Activated CD4-positive, alpha-beta T cell treated with anti-CD3 and anti-CD28 coated beads for 36 hours (primary cell): ENCODE measurements at regions of chr12 and their contacts with region 1.

Region 1: DNA sequence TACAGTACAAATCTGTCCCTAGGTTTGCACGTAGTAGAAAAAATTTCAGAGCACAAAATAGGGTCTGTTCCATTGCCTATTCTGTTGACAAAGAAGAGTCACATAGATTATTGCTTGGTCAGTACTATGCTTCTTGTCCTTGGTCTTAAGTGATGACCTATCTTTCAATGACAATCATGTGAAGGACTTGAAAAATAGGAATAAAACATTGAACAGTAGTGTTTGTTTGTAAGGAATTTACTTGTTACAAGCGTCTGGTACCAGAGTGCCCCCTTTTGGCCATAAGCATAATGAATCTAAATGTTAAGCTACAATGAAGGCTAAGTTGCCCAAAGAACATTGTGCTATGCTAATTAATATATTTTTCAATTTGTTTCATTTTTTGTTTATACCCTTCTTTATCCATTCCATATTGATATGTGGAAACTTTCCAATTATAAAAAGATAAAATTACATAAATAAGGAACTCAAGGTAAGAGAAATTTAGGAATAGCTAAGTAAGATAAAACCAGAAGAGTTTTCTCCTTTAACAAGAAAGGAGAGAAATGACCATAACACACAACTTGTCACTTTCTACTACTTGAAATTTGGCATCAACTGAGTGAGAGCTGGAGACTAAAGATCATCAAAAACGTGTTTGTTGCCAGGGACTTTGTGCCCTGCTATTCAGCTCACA is 204.7 kb downstream of the EPS8 start:
- DNase-seq: peak; percentile 53
- ATAC-seq: peak; percentile 64
- H3K4me3 Mint-ChIP-seq: no peak overlapping the region
- H3K27ac Mint-ChIP-seq: no peak overlapping the region
- H3K4me1 Mint-ChIP-seq: peaks cover 13% of the 10 kb centered on the region
- H3K27me3 Mint-ChIP-seq: no peaks in the 10 kb centered on the region

Region 2: GRCh38 chr12:15220994-15221885 is 363.3 kb before region 1 on chr12 and contains the start of gene RERG:
- CTCF ChIA-PET with region 1: interaction called, 3 read pairs
- POLR2A ChIA-PET with region 1: no interaction called
- intact Hi-C with region 1: loop called in 1 of 2 experiments (anchors 5 kb)
- DNase-seq: peak; percentile 86
- ATAC-seq: peak; percentile 99
- H3K4me3 Mint-ChIP-seq: peak within 1 kb of the TSS; percentile 36
- H3K27ac Mint-ChIP-seq: no peak within 1 kb of the TSS
- H3K4me1 Mint-ChIP-seq: peaks cover 2% of the 10 kb centered on the region
- H3K27me3 Mint-ChIP-seq: peaks cover 32% of the 10 kb centered on the region
- total RNA-seq, gene RERG: not detected

Region 3: GRCh38 chr12:15276088-15276698 is 308.3 kb before region 1 on chr12:
- CTCF ChIA-PET with region 1: interaction called, 14 read pairs
- POLR2A ChIA-PET with region 1: no interaction called
- intact Hi-C with region 1: loop called (anchors 1 kb)
- DNase-seq: no peak
- ATAC-seq: no peak
- H3K4me3 Mint-ChIP-seq: no peak overlapping the region
- H3K27ac Mint-ChIP-seq: no peak overlapping the region
- H3K4me1 Mint-ChIP-seq: peaks cover 7% of the 10 kb centered on the region
- H3K27me3 Mint-ChIP-seq: peaks cover 4% of the 10 kb centered on the region

Region 4: GRCh38 chr12:15532364-15532977 is 52.0 kb before region 1 on chr12:
- CTCF ChIA-PET with region 1: interaction called, 345 read pairs
- POLR2A ChIA-PET with region 1: interaction called, 9 read pairs
- intact Hi-C with region 1: loop called (anchors 1 kb)
- DNase-seq: peak; percentile 66
- ATAC-seq: peak; percentile 76
- H3K4me3 Mint-ChIP-seq: no peak overlapping the region
- H3K27ac Mint-ChIP-seq: no peak overlapping the region
- H3K4me1 Mint-ChIP-seq: no peaks in the 10 kb centered on the region
- H3K27me3 Mint-ChIP-seq: no peaks in the 10 kb centered on the region

Region 5: GRCh38 chr12:15546102-15546701 is 38.3 kb before region 1 on chr12:
- CTCF ChIA-PET with region 1: interaction called, 54 read pairs
- POLR2A ChIA-PET with region 1: no interaction called
- intact Hi-C with region 1: no loop called
- DNase-seq: peak; percentile 32
- ATAC-seq: peak; percentile 78
- H3K4me3 Mint-ChIP-seq: no peak overlapping the region
- H3K27ac Mint-ChIP-seq: peak overlapping the region; percentile 78
- H3K4me1 Mint-ChIP-seq: peaks cover 62% of the 10 kb centered on the region
- H3K27me3 Mint-ChIP-seq: no peaks in the 10 kb centered on the region

Region 6: DNA sequence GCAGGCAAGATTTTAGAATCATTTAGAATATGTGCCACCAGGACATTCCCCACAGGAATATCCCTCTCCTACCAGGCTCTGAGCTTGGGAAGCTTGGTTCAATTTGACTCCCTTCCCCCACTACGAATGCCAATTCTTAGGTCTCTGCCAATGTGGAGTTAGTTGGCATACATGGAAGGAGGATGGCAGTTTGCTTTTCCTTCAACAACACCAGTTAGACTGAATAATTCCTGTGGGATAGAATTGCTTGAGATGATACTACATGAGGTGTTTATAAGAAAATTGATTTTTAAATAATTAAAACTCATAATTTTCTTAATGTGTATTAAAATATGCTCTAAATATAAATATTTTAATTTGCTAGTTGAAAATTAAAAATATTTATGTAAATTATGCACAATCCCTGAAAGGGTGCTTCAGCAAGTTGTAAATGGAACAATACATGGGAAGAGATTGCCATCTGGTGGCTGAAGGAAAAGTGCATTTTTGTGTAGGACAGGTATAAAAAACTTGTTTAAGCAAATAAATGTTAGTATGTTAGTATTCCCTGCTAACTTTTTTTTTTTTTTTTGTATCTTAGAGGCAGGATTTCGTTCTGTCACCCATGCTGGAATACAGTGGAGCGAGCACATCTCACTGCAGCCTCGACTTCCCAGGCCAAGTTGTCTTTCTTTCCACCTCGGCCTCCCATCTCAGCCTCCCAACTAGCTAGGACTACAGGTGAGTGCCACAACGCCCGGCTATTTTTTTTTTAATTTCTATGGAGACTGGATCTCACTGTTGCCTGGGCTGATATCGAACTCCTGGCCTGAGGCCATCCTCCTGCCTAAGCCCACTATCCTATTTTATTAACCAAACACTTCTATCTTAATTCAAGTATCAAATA is 271.8 kb after region 1 on chr12:
- CTCF ChIA-PET with region 1: interaction called, 70 read pairs
- POLR2A ChIA-PET with region 1: no interaction called
- intact Hi-C with region 1: no loop called
- DNase-seq: peak; percentile 50
- ATAC-seq: no peak
- H3K4me3 Mint-ChIP-seq: no peak overlapping the region
- H3K27ac Mint-ChIP-seq: no peak overlapping the region
- H3K4me1 Mint-ChIP-seq: no peaks in the 10 kb centered on the region
- H3K27me3 Mint-ChIP-seq: peaks cover 3% of the 10 kb centered on the region